ENCODE measurements at regions of chr2 and their contacts with region 1.

Region 1: DNA sequence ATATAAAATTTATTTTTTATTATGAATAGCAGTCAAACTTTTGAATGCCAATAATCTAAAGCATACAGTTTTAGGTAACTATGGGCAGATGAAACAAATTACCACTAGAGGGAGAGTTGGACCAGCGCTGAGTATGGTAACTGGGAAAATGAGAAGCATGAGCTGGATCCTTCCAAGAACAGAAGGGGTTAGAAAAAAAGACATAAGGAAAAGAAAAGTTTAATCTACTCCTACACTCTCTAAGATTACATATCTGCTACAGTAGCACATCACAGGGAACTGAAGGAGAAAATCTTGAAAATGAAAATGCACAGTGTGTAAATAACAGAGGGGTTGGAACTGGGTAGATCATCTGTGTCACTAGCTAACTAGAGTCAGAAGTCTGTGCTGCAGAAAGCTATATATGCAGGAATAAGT is 15.5 kb downstream of the REG3G start:
- DNase-seq: peak; percentile 15
- ATAC-seq: peak; percentile 93
- H3K4me3 ChIP-seq: no peak overlapping the region
- H3K27ac ChIP-seq: no peak overlapping the region
- H3K4me1 ChIP-seq: no peaks in the 10 kb centered on the region
- H3K27me3 ChIP-seq: no peaks in the 10 kb centered on the region
- CTCF ChIP-seq: peak; percentile 58
- EP300 ChIP-seq: no peak
- POLR2A ChIP-seq: no peak
- RAD21 ChIP-seq: no peak

Region 2: GRCh38 chr2:78757640-78758039 is 283.4 kb before region 1 on chr2:
- CTCF ChIA-PET with region 1: no interaction called
- POLR2A ChIA-PET with region 1: no interaction called
- in situ Hi-C with region 1: no loop called
- intact Hi-C with region 1: no loop called
- DNase-seq: no peak
- ATAC-seq: no peak
- H3K4me3 ChIP-seq: no peak overlapping the region
- H3K27ac ChIP-seq: no peak overlapping the region
- H3K4me1 ChIP-seq: no peaks in the 10 kb centered on the region
- H3K27me3 ChIP-seq: no peaks in the 10 kb centered on the region
- CTCF ChIP-seq: no peak
- EP300 ChIP-seq: no peak
- POLR2A ChIP-seq: no peak
- RAD21 ChIP-seq: no peak

Region 3: GRCh38 chr2:79191081-79191480 is 150.0 kb after region 1 on chr2:
- CTCF ChIA-PET with region 1: no interaction called
- POLR2A ChIA-PET with region 1: no interaction called
- in situ Hi-C with region 1: no loop called
- intact Hi-C with region 1: no loop called
- DNase-seq: no peak
- ATAC-seq: no peak
- H3K4me3 ChIP-seq: no peak overlapping the region
- H3K27ac ChIP-seq: no peak overlapping the region
- H3K4me1 ChIP-seq: no peaks in the 10 kb centered on the region
- H3K27me3 ChIP-seq: no peaks in the 10 kb centered on the region
- CTCF ChIP-seq: no peak
- EP300 ChIP-seq: no peak
- POLR2A ChIP-seq: no peak
- RAD21 ChIP-seq: no peak

Region 4: DNA sequence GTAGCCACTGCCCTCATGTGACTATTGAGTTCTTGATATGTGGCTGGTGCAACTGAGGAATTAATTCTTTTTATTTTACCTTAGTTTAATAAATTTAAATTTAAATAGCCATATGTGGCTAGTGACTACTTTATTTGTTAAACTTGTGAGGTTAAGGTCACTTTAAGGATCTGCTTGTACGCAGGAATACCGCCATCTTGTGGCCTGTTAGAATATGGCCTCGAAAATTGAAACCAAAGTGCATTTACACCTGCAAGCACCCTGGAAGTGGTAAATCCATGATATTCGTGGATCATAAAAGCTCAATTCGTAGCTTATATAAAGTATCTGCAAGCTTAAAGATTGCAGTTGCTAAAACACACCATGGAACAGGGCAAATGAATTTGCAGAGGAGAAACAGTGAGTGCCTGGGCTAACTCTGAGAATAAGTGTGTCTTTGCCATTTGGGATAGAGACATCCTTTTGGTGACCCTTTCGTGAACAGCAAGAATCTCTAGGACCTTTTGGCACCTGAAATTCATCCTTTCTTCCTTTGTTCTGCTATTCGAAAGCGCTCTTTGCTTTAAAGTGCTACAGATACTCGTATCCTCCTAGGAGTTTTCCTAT is 178.4 kb after region 1 on chr2:
- CTCF ChIA-PET with region 1: interaction called, 9 read pairs
- POLR2A ChIA-PET with region 1: no interaction called
- in situ Hi-C with region 1: loop called (anchors 5 kb)
- intact Hi-C with region 1: loop called (anchors 1 kb)
- DNase-seq: peak; percentile 55
- ATAC-seq: peak; percentile 79
- H3K4me3 ChIP-seq: no peak overlapping the region
- H3K27ac ChIP-seq: no peak overlapping the region
- H3K4me1 ChIP-seq: no peaks in the 10 kb centered on the region
- H3K27me3 ChIP-seq: no peaks in the 10 kb centered on the region
- CTCF ChIP-seq: peak; percentile 80
- EP300 ChIP-seq: no peak
- POLR2A ChIP-seq: no peak
- RAD21 ChIP-seq: peak; percentile 54; the same call in 1 of the 2 replicates

Region 5: DNA sequence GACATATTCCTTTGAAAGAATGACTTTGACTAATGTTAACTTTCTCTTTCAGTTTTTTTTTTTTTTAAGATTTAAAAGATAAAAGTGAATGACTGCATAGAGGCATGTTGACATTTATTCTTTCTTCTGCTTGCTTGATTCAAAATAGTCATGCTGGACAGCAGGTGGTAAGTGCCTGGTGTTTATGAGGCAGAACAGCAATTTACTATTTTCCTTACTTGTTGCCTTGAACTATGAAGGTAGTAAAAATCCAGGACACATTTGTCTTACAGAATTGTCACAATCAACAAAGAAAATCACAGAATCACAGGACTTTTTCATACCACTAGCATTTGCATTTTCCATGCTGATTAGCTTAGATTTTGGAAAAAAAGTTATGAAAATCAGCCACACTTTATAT is 860.1 kb after region 1 on chr2:
- CTCF ChIA-PET with region 1: no interaction called
- POLR2A ChIA-PET with region 1: no interaction called
- in situ Hi-C with region 1: loop called (anchors 10 kb)
- intact Hi-C with region 1: no loop called
- DNase-seq: no peak
- ATAC-seq: no peak
- H3K4me3 ChIP-seq: no peak overlapping the region
- H3K27ac ChIP-seq: no peak overlapping the region
- H3K4me1 ChIP-seq: no peaks in the 10 kb centered on the region
- H3K27me3 ChIP-seq: peaks cover 0 to 13% of the 10 kb centered on the region in 2 experiments; a peak in 2 of 5 replicates
- CTCF ChIP-seq: no peak
- EP300 ChIP-seq: no peak
- POLR2A ChIP-seq: no peak
- RAD21 ChIP-seq: no peak

Measured in HepG2 (cell line).